Lower leg skin (tissue), 4 donors: ENCODE measurements at regions of chr19 and their contacts with region 1.

Region 1: DNA sequence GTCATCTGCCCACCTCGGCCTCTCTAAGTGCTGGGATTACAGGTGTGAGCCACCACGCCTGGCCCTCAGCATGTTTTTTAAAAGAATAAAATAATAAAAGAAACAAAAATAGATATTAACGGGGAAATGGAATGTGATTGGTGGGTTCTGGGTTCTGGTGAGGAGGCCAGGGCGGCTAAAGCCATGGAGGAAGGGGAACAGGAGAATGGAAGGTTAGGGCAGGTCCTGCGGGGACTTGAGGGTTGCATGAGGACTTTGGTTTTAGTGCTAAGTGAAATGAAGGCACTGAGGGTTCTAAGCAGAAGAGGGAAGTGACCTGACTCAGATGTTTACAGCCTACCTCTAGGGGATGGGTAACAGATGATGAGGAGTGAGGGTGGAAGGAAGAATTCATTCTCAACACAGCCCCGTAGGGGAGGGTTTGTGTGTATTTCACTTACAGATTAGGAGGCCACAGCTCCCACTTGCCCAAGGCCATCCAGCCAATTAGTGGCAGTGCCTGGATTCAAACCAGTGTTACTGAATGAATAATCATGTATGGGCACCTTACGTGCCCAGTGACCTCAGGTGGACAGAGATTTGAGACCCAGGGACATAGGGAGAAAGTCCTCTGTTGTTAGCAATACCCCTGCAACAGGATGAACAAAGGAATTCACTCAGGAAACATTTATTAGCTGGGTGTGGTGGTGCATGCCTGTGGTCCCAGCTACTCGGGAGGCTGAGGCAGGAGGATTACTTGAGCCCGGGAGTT is 6.7 kb upstream of the MRPL4 start:
- DNase-seq: no peak
- H3K4me3 ChIP-seq: no peak overlapping the region
- CTCF ChIP-seq: no peak
- POLR2A ChIP-seq: no peak

Region 2: DNA sequence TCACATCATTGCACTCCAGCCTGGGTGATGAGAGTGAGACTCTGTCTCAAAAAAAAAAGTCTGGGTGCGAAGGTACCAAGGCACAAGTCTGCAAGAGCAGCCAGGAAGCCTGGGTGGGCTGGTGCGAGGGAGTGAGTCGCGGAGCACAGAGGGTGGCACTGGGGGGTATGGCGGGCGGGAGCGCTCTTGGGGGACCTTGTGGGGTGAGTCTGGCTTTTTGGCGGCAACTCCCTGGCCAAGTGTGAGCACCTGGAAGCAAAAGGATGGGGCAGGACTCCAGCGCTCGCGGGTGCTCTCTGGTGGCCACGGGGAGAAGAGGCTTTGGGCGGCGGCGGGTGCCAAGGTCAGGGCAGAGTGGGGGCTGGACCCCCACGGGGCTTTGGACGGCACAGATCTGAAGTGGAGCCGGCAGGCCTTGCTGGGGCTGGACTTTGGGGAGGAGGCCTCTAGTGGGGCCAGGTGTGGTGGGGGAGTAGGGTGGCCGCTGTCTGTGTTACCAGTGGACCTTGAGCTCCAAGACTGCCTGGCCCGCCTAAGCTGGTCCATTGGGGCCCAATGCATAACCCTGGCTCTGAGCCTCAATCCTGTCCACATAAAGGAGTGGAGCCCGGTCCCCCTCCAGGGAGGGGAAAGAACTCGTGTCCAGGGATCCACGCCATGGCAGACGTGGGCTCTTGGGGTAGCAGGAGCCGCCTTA is 132.3 kb before region 1 on chr19:
- intact Hi-C with region 1: loop called (anchors 10 kb)
- DNase-seq: no peak
- H3K4me3 ChIP-seq: no peak overlapping the region
- CTCF ChIP-seq: peak in 1 of 3 donors; percentile 45
- POLR2A ChIP-seq: no peak